ENCODE measurements at regions of chr10 and their contacts with region 1.

Region 1: DNA sequence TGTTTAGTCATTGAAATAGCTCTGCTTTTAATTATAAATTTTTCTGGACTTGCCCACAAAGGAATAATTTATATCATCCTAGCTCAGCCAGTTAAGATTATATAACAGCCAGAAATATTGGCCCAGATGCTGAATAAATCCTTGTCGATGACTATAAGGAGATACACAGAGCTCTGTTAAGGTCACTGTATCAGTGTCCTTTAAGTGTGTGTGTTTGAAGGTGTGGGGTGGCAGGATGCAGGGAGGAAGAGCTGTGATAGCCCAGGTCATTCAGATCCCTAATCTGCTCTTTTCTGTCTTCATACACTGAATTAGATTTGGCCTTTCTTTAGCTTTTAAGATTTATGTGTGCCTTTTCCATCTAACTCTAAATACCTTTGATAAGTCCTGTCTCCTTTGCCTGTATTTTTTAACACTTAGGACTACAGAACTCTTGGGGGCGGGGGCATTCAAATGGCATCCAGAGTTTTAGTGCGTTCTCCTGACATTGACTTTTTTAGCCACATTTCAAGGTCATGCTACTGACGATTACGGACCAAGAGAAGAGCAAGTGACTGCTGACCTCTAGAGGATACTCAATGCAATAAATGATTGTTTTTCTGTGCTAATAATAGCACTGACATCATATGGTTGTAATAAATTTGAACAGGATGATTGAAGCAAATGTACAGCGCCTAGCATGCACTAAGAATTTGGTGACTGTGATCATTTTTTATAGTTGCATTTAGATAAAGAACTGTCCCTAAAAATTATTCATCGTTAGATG is 172.3 kb downstream of the CACNB2 start:
- DNase-seq: no peak
- H3K4me3 ChIP-seq: peak overlapping the region; percentile 28 to 50
- H3K27ac ChIP-seq: peak overlapping the region; percentile 58 to 76
- H3K4me1 ChIP-seq: peaks cover 0 to 22% of the 10 kb centered on the region in 2 donors
- H3K27me3 ChIP-seq: no peaks in the 10 kb centered on the region
- CTCF ChIP-seq: peak; percentile 18 to 40 (median 38)

Region 2: GRCh38 chr10:17847585-17848296 is 464.8 kb before region 1 on chr10:
- intact Hi-C with region 1: loop called (anchors 10 kb)
- DNase-seq: no peak
- H3K4me3 ChIP-seq: no peak overlapping the region
- H3K27ac ChIP-seq: no peak overlapping the region
- H3K4me1 ChIP-seq: no peaks in the 10 kb centered on the region
- H3K27me3 ChIP-seq: no peaks in the 10 kb centered on the region
- CTCF ChIP-seq: peak in 2 of 3 experiments; percentile 37 to 56

Region 3: DNA sequence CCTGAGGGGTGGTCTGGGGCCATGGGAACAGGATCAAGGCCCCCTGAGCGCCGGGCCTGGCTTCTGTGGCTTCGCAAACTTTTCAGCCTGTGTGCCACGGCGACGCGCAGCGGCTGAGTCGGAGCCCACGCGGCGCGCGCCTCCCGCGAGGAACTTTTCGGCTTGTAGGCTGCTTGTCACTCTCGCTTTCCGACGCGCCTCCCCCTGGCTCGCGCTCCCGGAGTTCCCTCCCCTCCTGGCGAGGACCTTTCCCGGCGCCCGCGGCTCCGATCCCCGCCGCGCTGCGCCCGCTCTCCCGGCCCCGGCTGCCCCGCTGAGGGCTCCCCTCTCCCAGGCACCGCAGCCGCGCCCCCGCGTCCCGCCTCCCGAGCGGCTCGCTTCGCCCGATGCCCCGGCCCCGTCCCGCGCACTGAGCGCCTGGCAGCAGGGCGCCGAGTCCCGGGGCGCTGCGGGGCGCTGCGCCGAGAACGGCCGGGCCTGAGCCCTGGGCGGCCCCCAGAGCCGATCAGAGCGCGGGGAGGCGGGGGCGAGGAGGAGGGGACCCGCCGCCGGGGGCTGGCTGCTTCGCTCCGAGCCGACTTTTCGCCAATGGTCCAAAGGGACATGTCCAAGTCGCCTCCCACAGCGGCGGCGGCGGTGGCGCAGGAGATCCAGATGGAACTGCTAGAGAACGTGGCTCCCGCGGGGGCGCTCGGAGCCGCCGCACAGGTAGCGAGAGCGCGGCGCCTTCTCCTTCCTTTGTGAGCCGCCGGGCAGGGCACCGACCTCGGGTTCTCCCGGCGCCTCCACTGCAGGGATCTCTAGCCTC is 172.2 kb before region 1 on chr10 and contains the start of gene CACNB2:
- intact Hi-C with region 1: loop called (anchors 2 kb)
- DNase-seq: peak in 1 of 2 donors; percentile 84
- H3K4me3 ChIP-seq: peak within 1 kb of the TSS; percentile 67 to 69
- H3K27ac ChIP-seq: peak within 1 kb of the TSS; percentile 80 to 82
- H3K4me1 ChIP-seq: peaks cover 0 to 10% of the 10 kb centered on the region in 2 donors
- H3K27me3 ChIP-seq: no peaks in the 10 kb centered on the region
- CTCF ChIP-seq: no peak
- total RNA-seq, gene CACNB2: 0.96 TPM

Region 4: DNA sequence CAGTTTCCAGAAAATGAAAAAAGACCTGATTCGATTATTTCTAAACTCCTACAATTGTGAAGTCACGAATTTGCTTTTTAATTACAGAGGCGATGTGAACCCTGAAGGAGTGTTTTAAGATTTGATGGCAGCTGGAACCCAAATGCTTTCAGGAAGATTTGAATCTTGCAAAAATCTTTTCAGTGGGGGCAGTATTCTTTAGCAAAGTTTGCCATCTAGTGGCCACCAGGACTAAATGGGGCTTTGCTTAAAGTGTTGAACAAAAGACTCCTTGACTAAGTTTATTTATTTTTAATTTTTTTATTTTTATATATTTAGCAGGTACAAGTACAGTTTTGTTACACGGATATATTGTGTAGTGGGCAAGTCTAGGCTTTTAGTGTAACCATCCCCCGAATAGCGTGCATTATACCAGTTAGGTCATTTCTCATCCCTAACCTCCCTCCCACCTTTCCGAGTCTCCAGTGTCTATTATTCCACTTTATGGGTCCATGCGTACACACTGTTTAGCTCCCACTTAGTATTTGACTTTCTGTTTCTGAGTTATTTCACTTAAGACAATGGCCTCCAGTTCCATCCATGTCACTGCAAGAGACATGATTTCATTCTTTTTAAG is 73.6 kb before region 1 on chr10:
- intact Hi-C with region 1: loop called (anchors 5 kb)
- DNase-seq: no peak
- H3K4me3 ChIP-seq: no peak overlapping the region
- H3K27ac ChIP-seq: no peak overlapping the region
- H3K4me1 ChIP-seq: peaks cover 0 to 21% of the 10 kb centered on the region in 2 donors
- H3K27me3 ChIP-seq: no peaks in the 10 kb centered on the region
- CTCF ChIP-seq: peak; percentile 19 to 69 (median 64)

Region 5: GRCh38 chr10:18290651-18291313 is 21.8 kb before region 1 on chr10:
- intact Hi-C with region 1: no loop called
- DNase-seq: no peak
- H3K4me3 ChIP-seq: no peak overlapping the region
- H3K27ac ChIP-seq: no peak overlapping the region
- H3K4me1 ChIP-seq: no peaks in the 10 kb centered on the region
- H3K27me3 ChIP-seq: no peaks in the 10 kb centered on the region
- CTCF ChIP-seq: no peak

Region 6: GRCh38 chr10:18381679-18382078 is 69.1 kb after region 1 on chr10:
- intact Hi-C with region 1: no loop called
- DNase-seq: no peak
- H3K4me3 ChIP-seq: no peak overlapping the region
- H3K27ac ChIP-seq: no peak overlapping the region
- H3K4me1 ChIP-seq: no peaks in the 10 kb centered on the region
- H3K27me3 ChIP-seq: no peaks in the 10 kb centered on the region
- CTCF ChIP-seq: no peak

Region 7: GRCh38 chr10:18472977-18473376 is 160.4 kb after region 1 on chr10:
- intact Hi-C with region 1: loop called (anchors 5 kb)
- DNase-seq: no peak
- H3K4me3 ChIP-seq: peak overlapping the region; percentile 31 to 43
- H3K27ac ChIP-seq: peak overlapping the region; percentile 68 to 78
- H3K4me1 ChIP-seq: peaks cover 0 to 10% of the 10 kb centered on the region in 2 donors
- H3K27me3 ChIP-seq: no peaks in the 10 kb centered on the region
- CTCF ChIP-seq: no peak

Region 8: GRCh38 chr10:18659120-18659818 is 346.7 kb after region 1 on chr10 and contains the start of gene ARL5B:
- intact Hi-C with region 1: loop called (anchors 2 kb)
- DNase-seq: peak; percentile 94 to 99
- H3K4me3 ChIP-seq: peak within 1 kb of the TSS; percentile 87 to 99
- H3K27ac ChIP-seq: peak within 1 kb of the TSS; percentile 98
- H3K4me1 ChIP-seq: peaks cover 8 to 19% of the 10 kb centered on the region in 2 donors
- H3K27me3 ChIP-seq: no peaks in the 10 kb centered on the region
- CTCF ChIP-seq: peak in 1 of 3 experiments; percentile 10
- total RNA-seq, gene ARL5B: 8.3 TPM

Measured in ascending aorta (tissue), 2 donors.